ENCODE measurements at regions of chr7 and their contacts with region 1.

Region 1: GRCh38 chr7:129468087-129468486 is 33.9 kb downstream of the STRIP2 start:
- DNase-seq: no peak
- H3K4me3 ChIP-seq: no peak overlapping the region
- H3K4me3 Mint-ChIP-seq: peak overlapping the region in 2 of 7 donors; percentile 4 to 13
- H3K27ac ChIP-seq: no peak overlapping the region
- H3K27ac Mint-ChIP-seq: peak overlapping the region in 4 of 8 donors; percentile 43 to 87 (median 56)
- H3K4me1 ChIP-seq: no peaks in the 10 kb centered on the region
- H3K4me1 Mint-ChIP-seq: peaks cover 0 to 8% (median 0%) of the 10 kb centered on the region in 3 donors
- H3K27me3 ChIP-seq: no peaks in the 10 kb centered on the region
- H3K27me3 Mint-ChIP-seq: no peaks in the 10 kb centered on the region

Region 2: GRCh38 chr7:129308047-129308446 is 160.0 kb before region 1 on chr7:
- CTCF ChIA-PET with region 1: no interaction called
- POLR2A ChIA-PET with region 1: no interaction called
- DNase-seq: no peak
- H3K4me3 ChIP-seq: no peak overlapping the region
- H3K4me3 Mint-ChIP-seq: no peak overlapping the region
- H3K27ac ChIP-seq: no peak overlapping the region
- H3K27ac Mint-ChIP-seq: no peak overlapping the region
- H3K4me1 ChIP-seq: no peaks in the 10 kb centered on the region
- H3K4me1 Mint-ChIP-seq: peaks cover 1 to 4% (median 2%) of the 10 kb centered on the region in 3 donors
- H3K27me3 ChIP-seq: no peaks in the 10 kb centered on the region
- H3K27me3 Mint-ChIP-seq: no peaks in the 10 kb centered on the region

Region 3: DNA sequence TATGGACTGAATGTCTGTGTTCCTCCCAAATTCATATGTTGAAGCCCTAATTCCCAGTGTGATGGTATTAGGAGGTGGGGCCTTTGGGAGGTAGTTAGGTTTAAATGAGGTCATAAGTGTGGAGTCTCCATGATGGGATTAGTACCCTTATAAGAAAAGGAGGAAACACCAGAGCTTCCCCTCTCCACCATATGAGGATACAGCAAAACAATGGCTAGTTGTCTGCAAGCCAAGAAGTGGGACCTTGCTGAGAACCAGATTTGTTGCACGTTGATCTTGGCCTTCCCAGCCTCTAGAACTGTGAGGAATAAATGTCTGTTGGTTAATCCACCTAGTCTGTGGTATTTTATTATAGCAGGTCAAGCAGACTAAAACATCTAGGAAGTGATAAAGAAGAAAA is 141.0 kb before region 1 on chr7:
- CTCF ChIA-PET with region 1: no interaction called
- POLR2A ChIA-PET with region 1: interaction called, 10 read pairs
- DNase-seq: no peak
- H3K4me3 ChIP-seq: no peak overlapping the region
- H3K4me3 Mint-ChIP-seq: no peak overlapping the region
- H3K27ac ChIP-seq: no peak overlapping the region
- H3K27ac Mint-ChIP-seq: no peak overlapping the region
- H3K4me1 ChIP-seq: no peaks in the 10 kb centered on the region
- H3K4me1 Mint-ChIP-seq: no peaks in the 10 kb centered on the region
- H3K27me3 ChIP-seq: no peaks in the 10 kb centered on the region
- H3K27me3 Mint-ChIP-seq: no peaks in the 10 kb centered on the region

Measured in CD8-positive, alpha-beta memory T cell (primary cell).